H1 (cell line): ENCODE measurements at regions of chr4 and their contacts with region 1.

Region 1: GRCh38 chr4:46648088-46648744 is 258.3 kb upstream of the GABRA2 start:
- DNase-seq: peak; percentile 51 to 66
- H3K4me3 ChIP-seq: no peak overlapping the region
- H3K27ac ChIP-seq: no peak overlapping the region
- H3K4me1 ChIP-seq: no peaks in the 10 kb centered on the region; a peak in 1 of 7 replicates
- H3K27me3 ChIP-seq: no peaks in the 10 kb centered on the region
- CTCF ChIP-seq: peak; percentile 83 to 98 (median 87)
- EP300 ChIP-seq: no peak
- POLR2A ChIP-seq: no peak
- RAD21 ChIP-seq: peak; percentile 95 to 97

Region 2: DNA sequence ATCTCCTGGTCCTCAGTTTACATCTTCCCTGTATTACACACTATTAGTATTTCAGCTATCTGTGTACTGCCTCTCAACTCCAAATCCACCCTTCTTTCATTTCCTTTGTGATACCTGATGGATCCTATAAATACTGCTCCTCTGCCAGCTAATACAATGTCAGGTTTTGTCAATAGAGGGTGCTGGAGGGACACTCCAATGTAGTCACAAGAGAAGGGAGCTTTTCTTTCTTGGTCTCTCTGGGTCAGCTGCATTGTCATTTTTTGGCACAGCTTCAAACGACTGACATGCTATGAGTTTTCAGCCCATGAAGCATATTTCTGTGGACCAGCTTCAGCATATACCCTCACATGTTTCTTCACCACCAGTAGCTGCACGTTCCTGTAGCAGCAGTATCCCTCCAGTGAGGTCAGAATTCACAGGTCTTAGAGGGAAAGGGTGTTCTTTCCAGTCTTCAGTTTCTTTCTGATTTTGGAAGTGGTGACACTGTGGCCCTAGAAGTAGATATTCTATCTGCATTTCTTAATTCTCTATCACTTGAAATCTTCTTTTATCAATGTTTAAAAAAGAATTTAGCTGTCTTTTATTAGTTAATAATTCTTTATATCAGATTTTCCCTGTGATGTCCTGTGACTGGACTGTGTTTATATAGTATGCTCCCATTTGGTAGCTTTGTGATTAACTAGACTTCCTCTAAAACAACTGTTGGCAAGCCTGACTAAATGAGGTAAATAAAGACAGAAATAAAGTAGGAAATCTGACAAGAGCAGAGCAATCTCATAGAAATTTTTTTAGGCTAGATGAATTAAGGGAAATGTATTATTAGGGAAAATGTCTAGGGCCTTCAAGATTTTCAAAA is 318.9 kb before region 1 on chr4:
- CTCF ChIA-PET with region 1: interaction called, 92 read pairs
- POLR2A ChIA-PET with region 1: no interaction called
- DNase-seq: peak; percentile 7 to 47
- H3K4me3 ChIP-seq: no peak overlapping the region
- H3K27ac ChIP-seq: no peak overlapping the region
- H3K4me1 ChIP-seq: peaks cover 0 to 2% (median 0%) of the 10 kb centered on the region in 4 experiments; a peak in 1 of 7 replicates
- H3K27me3 ChIP-seq: no peaks in the 10 kb centered on the region
- CTCF ChIP-seq: peak in 2 of 3 experiments; percentile 73 to 78; a peak in 3 of 4 replicates
- EP300 ChIP-seq: no peak
- POLR2A ChIP-seq: no peak
- RAD21 ChIP-seq: peak; percentile 85 to 90

Region 3: DNA sequence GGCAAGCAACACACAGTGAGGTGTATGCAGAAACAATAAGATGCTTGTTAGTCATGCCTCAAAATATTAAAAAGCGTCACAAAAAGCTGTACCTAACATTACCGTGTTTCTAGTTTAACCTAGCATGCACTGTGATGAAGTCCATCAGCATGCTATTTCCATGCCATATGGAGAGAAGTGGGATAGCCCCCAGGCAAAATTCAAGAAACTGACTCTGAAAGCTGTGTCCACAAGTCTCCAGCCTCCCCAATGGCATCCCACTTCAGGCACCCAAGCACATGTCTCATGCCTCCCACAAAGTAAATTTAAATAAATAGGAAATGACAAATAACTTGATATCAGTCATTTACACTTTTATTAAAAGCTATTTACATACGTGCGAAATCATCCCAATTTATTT is 269.1 kb before region 1 on chr4:
- CTCF ChIA-PET with region 1: interaction called, 10 read pairs
- POLR2A ChIA-PET with region 1: no interaction called
- DNase-seq: no peak
- H3K4me3 ChIP-seq: no peak overlapping the region
- H3K27ac ChIP-seq: no peak overlapping the region
- H3K4me1 ChIP-seq: no peaks in the 10 kb centered on the region
- H3K27me3 ChIP-seq: no peaks in the 10 kb centered on the region
- CTCF ChIP-seq: no peak
- EP300 ChIP-seq: no peak
- POLR2A ChIP-seq: no peak
- RAD21 ChIP-seq: no peak

Region 4: GRCh38 chr4:46386570-46386969 is 261.6 kb before region 1 on chr4:
- CTCF ChIA-PET with region 1: interaction called, 19 read pairs
- POLR2A ChIA-PET with region 1: no interaction called
- DNase-seq: no peak
- H3K4me3 ChIP-seq: no peak overlapping the region
- H3K27ac ChIP-seq: no peak overlapping the region
- H3K4me1 ChIP-seq: peaks cover 0 to 4% (median under 1%) of the 10 kb centered on the region in 4 experiments; a peak in 3 of 7 replicates
- H3K27me3 ChIP-seq: peaks cover 12 to 32% (median 27%) of the 10 kb centered on the region in 4 experiments
- CTCF ChIP-seq: peak; percentile 46 to 85 (median 66)
- EP300 ChIP-seq: no peak
- POLR2A ChIP-seq: no peak
- RAD21 ChIP-seq: peak; percentile 71 to 76

Region 5: GRCh38 chr4:46392421-46392820 is 255.8 kb before region 1 on chr4:
- CTCF ChIA-PET with region 1: interaction called, 19 read pairs
- POLR2A ChIA-PET with region 1: interaction called, 3 read pairs
- DNase-seq: no peak
- H3K4me3 ChIP-seq: no peak overlapping the region
- H3K27ac ChIP-seq: no peak overlapping the region
- H3K4me1 ChIP-seq: peaks cover 0 to 4% (median under 1%) of the 10 kb centered on the region in 4 experiments; a peak in 3 of 7 replicates
- H3K27me3 ChIP-seq: peaks cover 12 to 32% (median 27%) of the 10 kb centered on the region in 4 experiments
- CTCF ChIP-seq: no peak
- EP300 ChIP-seq: no peak
- POLR2A ChIP-seq: no peak
- RAD21 ChIP-seq: no peak

Region 6: DNA sequence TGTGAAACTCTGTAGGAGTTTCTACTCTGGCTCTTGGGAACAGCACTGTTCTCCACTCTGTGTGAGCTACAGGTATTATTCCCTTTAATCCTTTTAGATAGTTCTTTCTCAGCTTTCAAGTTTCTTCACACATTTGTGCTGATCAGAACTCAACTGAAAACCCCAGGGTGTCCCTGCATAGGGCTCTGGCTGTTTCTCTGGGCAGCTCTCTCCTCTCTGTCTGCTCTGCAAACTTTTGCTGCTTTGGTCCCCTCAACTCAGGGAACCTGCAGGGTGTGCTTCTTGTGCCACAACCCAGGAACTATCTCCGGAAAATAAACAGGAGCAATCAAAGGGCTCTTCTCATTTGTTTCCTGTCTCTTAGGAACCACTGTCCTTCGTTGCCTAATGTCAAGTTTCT is 61.6 kb before region 1 on chr4:
- CTCF ChIA-PET with region 1: interaction called, 10 read pairs
- POLR2A ChIA-PET with region 1: no interaction called
- DNase-seq: peak; percentile 5 to 47
- H3K4me3 ChIP-seq: no peak overlapping the region
- H3K27ac ChIP-seq: no peak overlapping the region
- H3K4me1 ChIP-seq: peaks cover 0 to 3% (median 0%) of the 10 kb centered on the region in 4 experiments; a peak in 2 of 7 replicates
- H3K27me3 ChIP-seq: no peaks in the 10 kb centered on the region
- CTCF ChIP-seq: no peak
- EP300 ChIP-seq: no peak
- POLR2A ChIP-seq: no peak
- RAD21 ChIP-seq: no peak